ENCODE measurements at regions of chr11 and their contacts with region 1.

Region 1: GRCh38 chr11:119323538-119324033 is 6.7 kb upstream of the MCAM start:
- DNase-seq: peak; percentile 83 to 86
- H3K4me3 ChIP-seq: no peak overlapping the region
- H3K27ac ChIP-seq: peak overlapping the region; percentile 99
- H3K4me1 ChIP-seq: peaks cover 0 to 48% (median 39%) of the 10 kb centered on the region in 4 donors
- H3K27me3 ChIP-seq: no peaks in the 10 kb centered on the region
- CTCF ChIP-seq: peak; percentile 77 to 82

Region 2: DNA sequence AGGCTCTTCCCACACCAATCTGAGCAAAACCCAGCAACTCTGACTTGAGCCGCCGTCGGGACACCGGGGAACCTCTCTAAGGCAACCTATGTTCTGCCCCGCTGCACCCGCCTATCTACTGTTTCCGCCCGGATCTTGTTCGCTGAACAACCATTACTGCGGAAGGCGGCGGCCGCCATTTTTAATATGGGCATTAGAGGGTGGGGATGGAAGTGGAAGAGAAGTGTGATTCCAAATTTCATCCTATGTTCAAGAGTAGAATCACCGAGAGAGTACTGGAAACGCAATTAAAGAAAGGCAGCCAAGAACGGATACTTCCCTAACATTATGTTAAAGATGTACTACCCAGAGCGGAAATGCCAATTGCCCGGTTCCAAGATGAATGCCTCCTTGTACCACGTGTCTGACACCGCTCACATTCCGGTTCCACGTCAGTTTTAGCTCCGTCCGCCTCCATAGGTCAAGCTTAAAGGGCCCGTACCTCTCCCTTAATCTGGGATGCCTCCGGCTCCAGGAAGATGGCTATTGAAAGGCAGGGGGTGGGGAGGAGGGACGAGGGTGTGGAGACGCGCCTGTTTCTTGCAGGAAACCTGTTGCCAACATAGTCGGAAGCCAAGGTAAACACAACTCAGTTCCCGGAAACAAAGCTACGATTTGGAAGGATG is 221.7 kb before region 1 on chr11 and contains the start of gene DPAGT1:
- intact Hi-C with region 1: loop called (anchors 10 kb)
- DNase-seq: peak; percentile 95 to 96
- H3K4me3 ChIP-seq: peak within 1 kb of the TSS; percentile 63 to 93
- H3K27ac ChIP-seq: peak within 1 kb of the TSS; percentile 83 to 93
- H3K4me1 ChIP-seq: peaks cover 9 to 37% (median 24%) of the 10 kb centered on the region in 4 donors
- H3K27me3 ChIP-seq: no peaks in the 10 kb centered on the region
- CTCF ChIP-seq: no peak

Region 3: DNA sequence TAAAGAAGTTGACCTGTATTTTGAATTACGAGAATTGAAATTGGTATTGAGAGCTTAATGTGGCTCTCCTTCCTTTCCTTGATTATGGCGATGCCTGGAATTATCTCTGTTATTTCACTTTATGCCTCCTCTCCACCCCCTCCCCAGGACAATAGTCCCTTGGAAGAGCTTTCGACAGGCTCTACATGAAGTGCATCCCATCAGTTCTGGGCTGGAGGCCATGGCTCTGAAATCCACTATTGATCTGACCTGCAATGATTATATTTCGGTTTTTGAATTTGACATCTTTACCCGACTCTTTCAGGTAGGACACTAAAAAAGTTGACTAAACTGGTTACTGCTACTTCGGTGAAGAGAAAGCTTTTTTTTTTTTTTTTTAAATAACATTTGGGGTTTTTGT is 49.9 kb before region 1 on chr11:
- intact Hi-C with region 1: no loop called
- DNase-seq: no peak
- H3K4me3 ChIP-seq: no peak overlapping the region
- H3K27ac ChIP-seq: no peak overlapping the region
- H3K4me1 ChIP-seq: no peaks in the 10 kb centered on the region
- H3K27me3 ChIP-seq: no peaks in the 10 kb centered on the region
- CTCF ChIP-seq: no peak

Region 4: GRCh38 chr11:119295178-119295577 is 28.4 kb before region 1 on chr11:
- intact Hi-C with region 1: no loop called
- DNase-seq: no peak
- H3K4me3 ChIP-seq: no peak overlapping the region
- H3K27ac ChIP-seq: no peak overlapping the region
- H3K4me1 ChIP-seq: peaks cover 0 to 18% (median 13%) of the 10 kb centered on the region in 4 donors
- H3K27me3 ChIP-seq: no peaks in the 10 kb centered on the region
- CTCF ChIP-seq: peak in 1 of 2 experiments; percentile 5

Region 5: DNA sequence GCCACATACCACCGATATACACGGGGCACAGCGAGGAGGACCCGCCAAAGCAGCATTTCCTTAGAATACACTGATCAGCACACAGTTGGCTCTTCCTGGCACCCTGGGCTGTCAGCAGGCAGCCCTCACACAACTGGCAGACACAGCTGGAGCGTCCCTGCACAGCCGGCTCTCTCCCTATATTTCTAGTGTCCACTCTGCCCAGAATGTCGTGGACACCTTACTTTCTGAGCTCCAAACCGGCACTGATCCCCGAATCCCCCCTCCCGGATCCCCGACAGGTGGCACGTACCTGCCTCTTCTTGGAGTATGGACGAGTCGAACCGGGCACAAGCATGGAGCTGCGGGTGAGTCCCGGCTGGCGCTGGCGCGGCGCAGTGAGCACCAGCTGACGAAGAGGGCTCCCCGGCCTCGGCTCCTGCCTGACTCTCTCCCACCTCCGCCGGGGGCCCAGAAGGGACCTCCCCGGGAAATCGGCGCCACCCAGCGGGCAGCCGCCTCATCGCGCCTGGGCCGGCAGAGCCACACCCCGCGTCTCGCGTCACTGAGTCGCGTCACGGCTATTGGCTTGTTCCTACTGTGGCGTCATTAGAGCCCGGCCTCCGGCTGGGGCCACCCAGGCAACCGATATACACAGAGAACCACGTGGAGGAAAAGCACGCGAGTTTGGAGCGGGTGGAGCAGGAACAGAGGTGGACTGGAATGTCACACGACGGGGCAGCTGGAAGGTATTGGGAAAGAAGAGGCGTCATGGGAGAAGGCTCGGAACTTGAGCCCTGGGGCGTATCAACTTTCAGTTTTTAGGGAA is 57.8 kb after region 1 on chr11 and contains the start of gene USP2:
- intact Hi-C with region 1: no loop called
- DNase-seq: peak; percentile 97 to 98
- H3K4me3 ChIP-seq: peak within 1 kb of the TSS; percentile 46 to 59
- H3K27ac ChIP-seq: peak within 1 kb of the TSS; percentile 63 to 66
- H3K4me1 ChIP-seq: peaks cover 0 to 28% (median 23%) of the 10 kb centered on the region in 4 donors
- H3K27me3 ChIP-seq: no peaks in the 10 kb centered on the region
- CTCF ChIP-seq: peak; percentile 88 to 89

Region 6: GRCh38 chr11:119481021-119481666 is 157.6 kb after region 1 on chr11:
- intact Hi-C with region 1: no loop called
- DNase-seq: peak; percentile 87 to 91
- H3K4me3 ChIP-seq: no peak overlapping the region
- H3K27ac ChIP-seq: no peak overlapping the region
- H3K4me1 ChIP-seq: peaks cover 0 to 10% (median 7%) of the 10 kb centered on the region in 4 donors
- H3K27me3 ChIP-seq: peaks cover 0 to 30% of the 10 kb centered on the region in 2 donors
- CTCF ChIP-seq: peak; percentile 88 to 93

Measured in tibial artery (tissue), 4 donors.